ENCODE measurements at regions of chr10 and their contacts with region 1.

Region 1: GRCh38 chr10:117477961-117478670 is 64.4 kb upstream of the EMX2 start:
- DNase-seq: peak; percentile 76
- ATAC-seq: peak; percentile 88
- H3K4me3 ChIP-seq: no peak overlapping the region
- H3K27ac ChIP-seq: no peak overlapping the region
- H3K4me1 ChIP-seq: peaks cover 7% of the 10 kb centered on the region
- H3K27me3 ChIP-seq: no peaks in the 10 kb centered on the region
- CTCF ChIP-seq: peak; percentile 60

Region 2: DNA sequence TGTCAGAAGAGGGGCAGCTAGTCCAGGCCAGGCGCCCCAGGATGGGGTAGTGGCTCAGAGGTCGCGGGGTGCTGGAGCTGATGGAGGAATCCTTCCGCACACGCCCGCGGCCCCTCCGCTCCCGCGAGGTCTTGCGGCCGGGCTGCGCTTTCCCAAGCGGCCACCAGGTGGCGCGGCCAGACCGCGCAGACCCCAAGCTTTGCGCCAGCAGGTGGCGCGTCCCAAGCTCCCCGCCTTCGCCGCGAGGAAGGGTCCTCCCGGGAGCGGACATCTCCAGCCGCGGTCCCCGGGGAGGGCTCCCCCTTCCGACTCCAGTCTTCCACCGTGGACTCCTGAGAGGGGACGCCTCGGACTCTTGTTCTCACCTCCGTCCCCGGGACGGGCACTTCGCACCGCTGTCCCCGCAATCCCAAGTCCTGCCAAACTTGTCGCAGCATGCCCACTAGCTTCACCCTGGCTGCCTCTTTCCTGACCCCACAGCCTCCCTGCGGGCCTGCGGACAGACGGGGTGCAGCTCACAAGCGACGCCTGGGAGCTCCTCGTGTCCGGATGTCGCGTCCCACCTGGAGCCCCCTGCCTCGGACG is 261.4 kb before region 1 on chr10:
- CTCF ChIA-PET with region 1: no interaction called
- POLR2A ChIA-PET with region 1: no interaction called
- intact Hi-C with region 1: loop called (anchors 2 kb)
- DNase-seq: peak; percentile 60
- ATAC-seq: peak; percentile 60
- H3K4me3 ChIP-seq: peak overlapping the region; percentile 67
- H3K27ac ChIP-seq: no peak overlapping the region
- H3K4me1 ChIP-seq: peaks cover 10% of the 10 kb centered on the region
- H3K27me3 ChIP-seq: no peaks in the 10 kb centered on the region
- CTCF ChIP-seq: peak; percentile 96

Region 3: DNA sequence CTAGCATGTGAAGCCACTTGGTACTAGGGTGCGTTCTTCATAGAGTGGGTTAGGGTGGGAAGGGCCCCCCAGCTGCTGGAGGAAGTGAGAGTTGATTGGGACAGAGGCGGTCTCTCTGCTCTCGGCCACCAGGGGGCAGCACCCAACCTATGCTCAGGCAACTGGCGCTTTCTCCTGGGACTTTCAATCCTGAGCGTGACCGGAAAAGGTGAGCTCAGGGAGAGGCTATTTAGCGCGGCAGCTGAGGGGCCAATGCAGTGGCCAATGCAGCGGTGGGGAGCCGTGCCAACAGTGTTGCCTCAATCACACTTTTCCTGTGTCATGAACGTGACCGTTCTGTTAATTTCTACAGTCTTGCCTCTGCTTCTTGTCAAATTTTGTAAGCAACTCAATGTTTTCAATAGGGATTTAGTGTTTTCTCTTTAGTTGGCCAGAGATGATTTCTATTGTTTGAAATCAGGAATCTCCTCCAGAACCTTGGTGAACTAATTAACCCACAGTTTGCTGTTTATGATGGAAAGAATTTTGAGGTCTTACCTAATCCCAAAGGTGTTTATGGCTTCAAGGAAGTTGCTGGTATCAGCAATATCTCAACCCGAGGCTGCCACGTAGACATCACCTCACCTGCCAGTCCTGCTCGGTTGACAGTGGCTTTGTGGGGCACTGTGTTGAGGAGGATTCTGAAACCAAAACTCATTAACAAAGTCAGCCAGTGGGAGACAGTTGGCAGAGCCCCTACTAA is 35.0 kb before region 1 on chr10:
- CTCF ChIA-PET with region 1: interaction called, 17 read pairs
- POLR2A ChIA-PET with region 1: interaction called, 3 read pairs
- intact Hi-C with region 1: loop called (anchors 1 kb)
- DNase-seq: peak; percentile 59
- ATAC-seq: peak; percentile 75
- H3K4me3 ChIP-seq: no peak overlapping the region
- H3K27ac ChIP-seq: no peak overlapping the region
- H3K4me1 ChIP-seq: peaks cover 13% of the 10 kb centered on the region
- H3K27me3 ChIP-seq: no peaks in the 10 kb centered on the region
- CTCF ChIP-seq: peak; percentile 76

Measured in PC-3 (cell line).